ENCODE measurements at regions of chrX and their contacts with region 1.

Region 1: GRCh38 chrX:101206471-101206870 is 13.1 kb upstream of the DRP2 start:
- DNase-seq: peak; percentile 10
- H3K4me3 Mint-ChIP-seq: no peak overlapping the region
- H3K27ac Mint-ChIP-seq: no peak overlapping the region
- H3K4me1 Mint-ChIP-seq: peaks cover 23% of the 10 kb centered on the region
- H3K27me3 Mint-ChIP-seq: no peaks in the 10 kb centered on the region

Region 2: GRCh38 chrX:100685284-100685996 is 521.0 kb before region 1 on chrX:
- CTCF ChIA-PET with region 1: no interaction called
- POLR2A ChIA-PET with region 1: no interaction called
- intact Hi-C with region 1: loop called (anchors 10 kb)
- DNase-seq: peak; percentile 71
- H3K4me3 Mint-ChIP-seq: no peak overlapping the region
- H3K27ac Mint-ChIP-seq: no peak overlapping the region
- H3K4me1 Mint-ChIP-seq: peaks cover 12% of the 10 kb centered on the region
- H3K27me3 Mint-ChIP-seq: peaks cover 1% of the 10 kb centered on the region

Region 3: GRCh38 chrX:100994352-100995281 is 211.9 kb before region 1 on chrX:
- CTCF ChIA-PET with region 1: no interaction called
- POLR2A ChIA-PET with region 1: no interaction called
- intact Hi-C with region 1: loop called (anchors 10 kb)
- DNase-seq: peak; percentile 27
- H3K4me3 Mint-ChIP-seq: no peak overlapping the region
- H3K27ac Mint-ChIP-seq: peak overlapping the region; percentile 76
- H3K4me1 Mint-ChIP-seq: peaks cover 24% of the 10 kb centered on the region
- H3K27me3 Mint-ChIP-seq: no peaks in the 10 kb centered on the region

Region 4: DNA sequence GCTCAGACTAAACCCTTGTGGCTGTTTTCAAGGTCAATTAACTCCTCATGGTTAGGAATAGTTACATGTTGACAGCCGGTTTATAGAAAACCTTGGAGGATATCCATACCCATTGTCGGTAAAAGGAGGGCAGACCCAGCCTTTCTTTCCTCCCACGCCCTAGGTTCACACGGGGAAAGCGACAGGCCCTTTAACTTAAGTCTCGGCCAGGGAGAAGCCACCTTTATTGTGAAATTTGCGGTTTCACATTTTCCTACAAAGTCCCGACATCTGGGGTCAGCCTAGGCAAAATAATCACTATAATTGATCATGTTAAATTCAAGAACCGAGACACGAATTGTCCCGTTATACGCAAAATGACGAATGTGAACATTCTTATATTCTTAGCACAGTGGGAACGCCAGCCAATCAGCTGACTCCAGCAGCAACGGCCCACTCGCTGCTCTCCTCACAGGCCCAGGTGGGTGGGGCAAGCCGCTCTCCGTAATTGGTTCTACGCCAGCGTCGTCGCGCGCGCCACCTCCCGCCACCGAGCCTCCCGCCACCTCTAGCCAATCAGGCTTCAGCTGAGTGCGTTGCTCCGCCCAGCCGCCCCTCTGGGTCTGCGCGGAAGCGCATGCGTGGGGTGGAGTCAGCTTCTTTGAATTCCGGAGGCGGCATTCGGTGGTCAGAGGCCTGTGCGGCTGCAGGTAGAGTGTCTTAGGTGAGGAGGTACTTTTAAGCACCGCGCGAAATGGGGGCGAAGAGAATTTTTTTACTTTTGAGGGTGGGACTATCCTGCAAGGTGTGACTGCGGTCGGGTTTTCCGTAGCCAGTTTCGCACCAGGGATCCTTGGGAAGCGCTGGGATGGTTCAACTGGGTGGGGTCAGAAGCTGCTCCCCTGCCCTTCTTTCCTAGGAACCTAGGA is 108.7 kb before region 1 on chrX and contains the start of gene CENPI:
- CTCF ChIA-PET with region 1: no interaction called
- POLR2A ChIA-PET with region 1: no interaction called
- intact Hi-C with region 1: loop called (anchors 5 kb)
- DNase-seq: peak; percentile 95
- H3K4me3 Mint-ChIP-seq: peak within 1 kb of the TSS; percentile 84
- H3K27ac Mint-ChIP-seq: peak within 1 kb of the TSS; percentile 81
- H3K4me1 Mint-ChIP-seq: peaks cover 30% of the 10 kb centered on the region
- H3K27me3 Mint-ChIP-seq: no peaks in the 10 kb centered on the region
- total RNA-seq, gene CENPI: 21.1 to 22.3 TPM

Region 5: GRCh38 chrX:101348452-101349192 is 142.2 kb after region 1 on chrX and contains the start of gene TIMM8A:
- CTCF ChIA-PET with region 1: no interaction called
- POLR2A ChIA-PET with region 1: no interaction called
- intact Hi-C with region 1: loop called (anchors 2 kb)
- DNase-seq: peak; percentile 86
- H3K4me3 Mint-ChIP-seq: peak within 1 kb of the TSS; percentile 91
- H3K27ac Mint-ChIP-seq: peak within 1 kb of the TSS; percentile 92
- H3K4me1 Mint-ChIP-seq: peaks cover 12% of the 10 kb centered on the region
- H3K27me3 Mint-ChIP-seq: no peaks in the 10 kb centered on the region
- total RNA-seq, gene TIMM8A: 21.9 to 23.1 TPM

Region 6: DNA sequence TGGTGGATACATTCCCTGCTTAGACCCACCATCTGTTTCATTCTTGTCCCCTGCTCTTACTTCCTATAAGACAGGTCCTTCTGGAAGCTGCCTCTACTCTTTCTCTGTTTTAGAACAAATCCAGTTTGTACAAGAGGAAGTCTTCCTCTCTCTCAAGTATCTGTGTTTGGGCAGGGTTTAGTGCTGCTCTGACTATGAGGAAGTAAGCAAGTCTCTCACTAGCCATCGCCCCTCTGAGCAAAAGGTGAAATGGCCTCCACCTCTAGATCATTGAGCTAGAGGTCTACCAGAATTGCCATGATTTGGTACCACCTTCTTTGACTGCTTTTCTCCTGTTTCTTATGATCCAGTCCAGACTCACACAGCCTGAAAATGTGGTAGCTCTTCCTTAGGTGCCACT is 171.1 kb after region 1 on chrX:
- CTCF ChIA-PET with region 1: no interaction called
- POLR2A ChIA-PET with region 1: no interaction called
- intact Hi-C with region 1: no loop called
- DNase-seq: no peak
- H3K4me3 Mint-ChIP-seq: no peak overlapping the region
- H3K27ac Mint-ChIP-seq: no peak overlapping the region
- H3K4me1 Mint-ChIP-seq: no peaks in the 10 kb centered on the region
- H3K27me3 Mint-ChIP-seq: peaks cover 3% of the 10 kb centered on the region